Left colon (tissue), 2 donors: ENCODE measurements at regions of chrX and their contacts with region 1.

Region 1: DNA sequence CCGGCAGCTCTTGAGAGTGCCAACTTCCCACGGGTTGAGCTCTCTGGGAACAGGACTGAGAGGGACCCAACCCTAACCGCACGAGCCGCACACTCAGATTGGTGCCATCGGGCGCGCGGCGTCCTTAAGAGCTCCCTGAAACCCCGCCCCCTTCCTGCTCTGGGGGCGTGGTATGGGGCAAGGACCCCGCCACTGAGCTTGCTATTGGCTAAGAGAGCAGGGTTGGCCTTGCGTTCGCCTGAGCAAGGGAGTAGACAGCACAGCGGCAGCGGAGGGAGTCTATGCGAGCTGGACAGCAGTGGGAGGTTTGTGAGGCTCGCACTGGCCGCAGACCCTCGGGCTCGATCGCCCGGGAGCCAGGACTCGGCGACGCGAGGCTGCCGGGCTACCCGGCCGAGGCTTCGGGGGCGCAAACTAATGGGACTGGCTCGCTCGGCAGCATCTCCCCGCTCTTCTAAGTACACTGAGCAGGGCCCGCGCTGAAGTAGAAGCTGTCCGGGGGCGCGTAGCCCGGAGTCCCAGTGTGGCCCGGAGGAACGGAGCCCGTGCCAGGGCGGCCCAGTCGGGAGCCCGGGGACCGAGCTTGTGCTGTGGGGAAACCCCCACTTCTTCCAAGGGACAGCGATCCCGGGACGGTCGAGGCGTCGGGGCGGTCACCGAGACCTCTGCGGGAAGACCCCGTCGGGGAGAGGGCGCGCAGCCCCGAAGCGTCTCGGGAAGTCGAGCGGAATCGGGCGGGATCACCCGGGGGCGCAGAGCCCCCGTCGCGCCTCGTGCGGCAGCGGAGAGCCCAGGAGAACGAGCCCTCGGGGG is at the start of gene EFNB1:
- DNase-seq: peak; percentile 89 to 93
- ATAC-seq: peak; percentile 78
- total RNA-seq, gene EFNB1: 68.5 to 80.0 TPM

Region 2: DNA sequence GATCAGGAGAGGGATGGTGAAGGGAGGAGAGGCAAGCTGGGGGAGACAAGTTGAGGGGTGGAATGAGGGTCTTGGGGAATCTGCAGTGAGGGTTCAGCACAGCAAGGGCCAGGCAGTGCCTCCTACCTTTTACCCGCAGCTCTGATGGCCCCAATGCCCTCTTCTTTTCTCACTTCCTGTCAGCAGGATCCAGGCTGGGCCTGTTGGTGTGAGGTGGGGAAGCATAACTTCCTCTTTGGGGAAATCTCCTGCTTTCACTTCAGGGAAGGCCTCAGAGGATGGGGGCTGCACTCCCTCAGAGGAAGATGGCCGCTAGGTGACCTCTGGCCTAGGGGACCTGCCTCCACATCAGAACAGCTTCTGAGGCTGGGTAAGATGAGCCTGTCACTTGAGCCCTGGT is 36.4 kb after region 1 on chrX:
- intact Hi-C with region 1: no loop called
- DNase-seq: no peak
- ATAC-seq: no peak

Region 3: GRCh38 chrX:69060631-69061408 is 231.9 kb after region 1 on chrX:
- intact Hi-C with region 1: loop called in 1 of 2 experiments (anchors 10 kb)
- DNase-seq: peak in 1 of 2 donors; percentile 41
- ATAC-seq: peak; percentile 84

Region 4: GRCh38 chrX:69216911-69217310 is 388.0 kb after region 1 on chrX:
- intact Hi-C with region 1: loop called (anchors 5 to 10 kb)
- DNase-seq: no peak
- ATAC-seq: no peak

Region 5: GRCh38 chrX:69222103-69223090 is 393.5 kb after region 1 on chrX:
- intact Hi-C with region 1: loop called (anchors 5 to 10 kb)
- DNase-seq: peak; percentile 33 to 72
- ATAC-seq: peak; percentile 73

Region 6: DNA sequence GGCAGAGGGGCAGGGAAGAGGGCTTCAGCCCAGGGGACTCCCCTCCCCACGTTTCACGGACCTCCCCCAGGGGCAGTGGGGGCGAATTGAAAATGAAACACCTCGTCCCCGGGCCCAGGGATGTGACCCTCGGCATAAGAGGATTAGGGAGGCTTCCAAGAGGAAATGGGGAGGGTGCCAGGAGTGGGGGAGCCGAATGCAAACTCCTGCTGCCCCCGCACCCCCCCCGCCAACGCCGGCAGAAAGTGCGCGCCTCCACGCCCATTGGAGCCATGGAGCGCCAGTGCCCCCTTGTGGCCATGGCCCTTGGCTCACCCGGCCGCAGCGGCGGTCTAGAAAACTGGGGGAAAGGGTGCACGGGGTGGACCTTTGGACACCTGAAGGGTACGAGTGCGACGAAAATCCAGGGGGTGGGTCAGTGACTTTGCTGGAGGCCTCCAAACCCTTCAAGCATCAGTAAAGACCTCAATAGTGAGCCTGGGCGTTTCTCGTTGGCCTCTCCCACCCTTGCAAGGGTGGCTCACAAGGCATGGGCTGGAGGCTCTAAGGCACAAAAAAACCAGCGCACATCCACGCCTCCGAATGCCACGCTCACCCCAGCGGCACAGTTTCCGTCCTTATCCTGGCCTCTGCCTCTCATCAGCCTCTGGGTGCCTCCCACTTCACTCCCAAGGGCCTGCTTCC is 457.1 kb after region 1 on chrX:
- intact Hi-C with region 1: loop called (anchors 5 to 10 kb)
- DNase-seq: peak; percentile 42 to 74
- ATAC-seq: peak; percentile 86